ENCODE measurements at regions of chr13 and their contacts with region 1.

Region 1: GRCh38 chr13:112942689-112943308 is 26.2 kb upstream of the MCF2L start:
- DNase-seq: peak; percentile 94 to 97 (median 96)
- ATAC-seq: peak; percentile 94 to 97 (median 95)
- H3K4me3 ChIP-seq: peak overlapping the region; percentile 24 to 68 (median 58)
- H3K27ac ChIP-seq: peak overlapping the region; percentile 9 to 78 (median 66)
- H3K4me1 ChIP-seq: peaks cover 0 to 15% (median 6%) of the 10 kb centered on the region in 12 donors
- H3K27me3 ChIP-seq: peaks cover 0 to 12% (median 0%) of the 10 kb centered on the region in 9 donors
- CTCF ChIP-seq: peak; percentile 95 to 99 (median 96)
- POLR2A ChIP-seq: no peak

Region 2: GRCh38 chr13:112783135-112783977 is 159.4 kb before region 1 on chr13:
- intact Hi-C with region 1: no loop called
- DNase-seq: no peak
- ATAC-seq: peak; percentile 54 to 80 (median 64)
- H3K4me3 ChIP-seq: no peak overlapping the region
- H3K27ac ChIP-seq: peak overlapping the region in 10 of 12 donors; percentile 50 to 86 (median 77)
- H3K4me1 ChIP-seq: peaks cover 0 to 39% (median 26%) of the 10 kb centered on the region in 12 donors
- H3K27me3 ChIP-seq: no peaks in the 10 kb centered on the region
- CTCF ChIP-seq: no peak
- POLR2A ChIP-seq: no peak

Region 3: GRCh38 chr13:112984954-112985802 is 42.4 kb after region 1 on chr13:
- intact Hi-C with region 1: loop called in 3 of 10 experiments (anchors 5 kb)
- DNase-seq: no peak
- ATAC-seq: no peak
- H3K4me3 ChIP-seq: peak overlapping the region in 7 of 12 donors; percentile 6 to 62 (median 22)
- H3K27ac ChIP-seq: peak overlapping the region in 9 of 12 donors; percentile 19 to 92 (median 31)
- H3K4me1 ChIP-seq: peaks cover 0 to 57% (median 17%) of the 10 kb centered on the region in 12 donors
- H3K27me3 ChIP-seq: no peaks in the 10 kb centered on the region
- CTCF ChIP-seq: no peak
- POLR2A ChIP-seq: no peak

Region 4: DNA sequence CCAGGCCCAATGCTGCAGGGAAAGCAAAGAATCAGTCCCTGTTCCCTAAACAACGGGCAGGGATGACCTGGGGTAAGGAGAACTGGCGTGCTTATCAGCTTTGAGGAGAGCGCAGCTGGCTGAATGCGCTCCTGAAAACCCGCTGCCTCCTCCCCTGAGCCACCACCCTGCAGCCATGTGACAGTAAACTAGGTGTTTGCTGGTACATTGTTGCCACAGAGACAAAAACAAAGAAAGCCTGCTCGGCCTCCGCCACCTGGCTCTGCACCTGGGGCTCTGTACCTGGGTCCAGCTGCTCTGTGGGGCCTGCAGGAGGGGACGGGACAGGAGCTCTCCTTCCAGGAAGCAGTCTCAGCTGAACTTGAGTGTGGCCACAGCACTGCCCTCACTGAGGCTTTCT is 48.0 kb after region 1 on chr13:
- intact Hi-C with region 1: loop called in 1 of 10 experiments (anchors 5 kb)
- DNase-seq: no peak
- ATAC-seq: peak in 3 of 4 donors; percentile 14 to 43 (median 33)
- H3K4me3 ChIP-seq: no peak overlapping the region
- H3K27ac ChIP-seq: no peak overlapping the region
- H3K4me1 ChIP-seq: peaks cover 0 to 58% (median 17%) of the 10 kb centered on the region in 12 donors
- H3K27me3 ChIP-seq: no peaks in the 10 kb centered on the region
- CTCF ChIP-seq: no peak
- POLR2A ChIP-seq: no peak

Region 5: GRCh38 chr13:113001241-113002140 is 58.7 kb after region 1 on chr13:
- intact Hi-C with region 1: loop called in 1 of 10 experiments (anchors 10 kb)
- DNase-seq: peak in 2 of 5 donors; percentile 64 to 66
- ATAC-seq: peak; percentile 24 to 76 (median 64)
- H3K4me3 ChIP-seq: peak overlapping the region in 11 of 12 donors; percentile 13 to 52 (median 43)
- H3K27ac ChIP-seq: peak overlapping the region in 4 of 12 donors; percentile 10 to 61 (median 32)
- H3K4me1 ChIP-seq: peaks cover 11 to 55% (median 35%) of the 10 kb centered on the region in 12 donors
- H3K27me3 ChIP-seq: peaks cover 0 to 13% (median 0%) of the 10 kb centered on the region in 9 donors
- CTCF ChIP-seq: no peak
- POLR2A ChIP-seq: no peak

Region 6: DNA sequence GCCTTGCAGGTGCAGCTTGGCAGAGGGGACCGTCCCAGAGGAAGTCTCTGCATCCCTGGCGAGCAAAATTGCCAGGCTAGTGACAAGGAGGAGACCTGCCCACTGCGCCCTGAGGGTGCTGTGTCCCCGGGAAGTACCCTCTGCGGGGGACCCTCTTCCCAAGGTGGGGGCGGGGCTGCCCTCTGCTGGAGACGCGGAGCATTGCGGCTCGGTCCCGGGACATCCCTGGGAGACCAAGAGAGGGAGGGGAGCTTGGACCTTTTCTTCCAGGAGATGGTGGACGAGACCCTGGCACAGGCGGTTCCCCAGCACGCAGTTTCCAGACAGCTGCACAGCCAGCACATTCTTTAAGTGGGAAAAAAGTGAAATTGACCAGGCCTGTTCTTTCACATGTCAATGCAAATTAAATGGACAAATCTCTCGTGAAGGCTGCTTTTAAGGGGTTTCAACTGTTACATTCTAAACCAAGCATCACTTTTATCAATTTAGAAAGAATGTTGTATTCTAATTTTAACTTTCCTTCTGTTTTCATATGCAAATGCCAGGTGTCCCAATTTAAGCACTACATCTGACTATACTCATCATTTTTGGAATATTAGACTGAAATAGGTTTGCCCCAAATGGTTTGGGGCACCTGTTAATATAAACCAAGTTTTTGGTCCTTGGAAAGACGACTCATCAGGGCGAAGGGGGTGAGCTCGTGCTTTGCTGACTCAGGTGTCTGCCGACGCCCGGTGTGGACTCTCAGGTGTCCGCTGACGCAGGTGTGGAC is 86.9 kb after region 1 on chr13:
- intact Hi-C with region 1: loop called in 8 of 10 experiments (anchors 1 to 5 kb)
- DNase-seq: no peak
- ATAC-seq: peak in 2 of 4 donors; percentile 27 to 60
- H3K4me3 ChIP-seq: no peak overlapping the region
- H3K27ac ChIP-seq: no peak overlapping the region
- H3K4me1 ChIP-seq: peaks cover 0 to 10% (median under 1%) of the 10 kb centered on the region in 12 donors
- H3K27me3 ChIP-seq: peaks cover 0 to 5% (median 0%) of the 10 kb centered on the region in 9 donors
- CTCF ChIP-seq: peak; percentile 61 to 87 (median 76)
- POLR2A ChIP-seq: no peak

Region 7: GRCh38 chr13:113216254-113217048 is 273.7 kb after region 1 on chr13:
- intact Hi-C with region 1: loop called in 3 of 10 experiments (anchors 5 to 10 kb)
- DNase-seq: peak; percentile 30 to 75 (median 55)
- ATAC-seq: peak; percentile 84 to 91 (median 86)
- H3K4me3 ChIP-seq: no peak overlapping the region
- H3K27ac ChIP-seq: peak overlapping the region; percentile 41 to 89 (median 73)
- H3K4me1 ChIP-seq: peaks cover 0 to 92% (median 63%) of the 10 kb centered on the region in 12 donors
- H3K27me3 ChIP-seq: no peaks in the 10 kb centered on the region
- CTCF ChIP-seq: no peak
- POLR2A ChIP-seq: no peak

Region 8: DNA sequence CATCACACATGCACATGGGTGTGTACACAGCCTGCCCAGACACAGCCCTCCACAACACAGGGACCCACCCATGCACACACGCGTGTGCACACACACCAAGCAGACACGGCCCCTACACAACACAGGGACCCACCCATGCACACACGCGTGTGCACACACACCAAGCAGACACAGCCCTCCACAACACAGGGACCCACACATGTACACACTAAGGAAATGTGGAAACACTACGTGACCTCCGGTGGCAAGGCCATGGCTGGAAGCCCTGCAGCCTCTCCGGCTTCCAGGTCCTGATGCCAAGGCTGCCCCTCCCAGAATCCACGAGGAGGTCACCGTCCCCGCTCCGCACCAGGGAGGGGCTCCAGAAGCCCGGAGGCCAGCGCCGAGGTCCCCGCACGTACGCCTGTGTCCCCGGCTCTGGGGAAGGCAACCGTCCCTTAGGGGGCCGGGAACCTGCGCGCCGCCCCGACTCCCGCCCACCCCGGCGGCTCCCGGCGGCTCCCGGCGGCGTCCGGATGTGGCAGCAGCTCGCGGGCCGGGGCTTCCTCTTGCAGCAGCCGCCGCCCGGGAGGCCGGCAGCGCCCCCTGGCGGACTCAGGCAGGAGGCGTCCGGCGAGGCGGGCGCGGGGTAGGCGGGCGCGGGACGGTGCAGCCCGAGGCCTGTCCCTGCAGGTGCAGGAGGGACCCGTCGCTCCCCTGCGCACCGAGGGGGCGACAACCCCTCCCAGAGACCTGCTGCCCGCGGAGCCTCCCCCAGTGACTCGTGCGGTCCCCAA is 451.0 kb after region 1 on chr13:
- intact Hi-C with region 1: loop called in 9 of 10 experiments (anchors 2 to 10 kb)
- DNase-seq: peak; percentile 81 to 92 (median 84)
- ATAC-seq: peak; percentile 44 to 89 (median 77)
- H3K4me3 ChIP-seq: peak overlapping the region; percentile 53 to 93 (median 80)
- H3K27ac ChIP-seq: peak overlapping the region in 11 of 12 donors; percentile 31 to 85 (median 75)
- H3K4me1 ChIP-seq: peaks cover 0 to 21% (median 9%) of the 10 kb centered on the region in 12 donors
- H3K27me3 ChIP-seq: no peaks in the 10 kb centered on the region
- CTCF ChIP-seq: peak; percentile 66 to 98 (median 90)
- POLR2A ChIP-seq: peak in 1 of 2 donors; percentile 36

Measured in heart left ventricle (tissue), 16 donors.